Heart right ventricle (tissue), 16 donors: ENCODE measurements at regions of chr5 and their contacts with region 1.

Region 1: DNA sequence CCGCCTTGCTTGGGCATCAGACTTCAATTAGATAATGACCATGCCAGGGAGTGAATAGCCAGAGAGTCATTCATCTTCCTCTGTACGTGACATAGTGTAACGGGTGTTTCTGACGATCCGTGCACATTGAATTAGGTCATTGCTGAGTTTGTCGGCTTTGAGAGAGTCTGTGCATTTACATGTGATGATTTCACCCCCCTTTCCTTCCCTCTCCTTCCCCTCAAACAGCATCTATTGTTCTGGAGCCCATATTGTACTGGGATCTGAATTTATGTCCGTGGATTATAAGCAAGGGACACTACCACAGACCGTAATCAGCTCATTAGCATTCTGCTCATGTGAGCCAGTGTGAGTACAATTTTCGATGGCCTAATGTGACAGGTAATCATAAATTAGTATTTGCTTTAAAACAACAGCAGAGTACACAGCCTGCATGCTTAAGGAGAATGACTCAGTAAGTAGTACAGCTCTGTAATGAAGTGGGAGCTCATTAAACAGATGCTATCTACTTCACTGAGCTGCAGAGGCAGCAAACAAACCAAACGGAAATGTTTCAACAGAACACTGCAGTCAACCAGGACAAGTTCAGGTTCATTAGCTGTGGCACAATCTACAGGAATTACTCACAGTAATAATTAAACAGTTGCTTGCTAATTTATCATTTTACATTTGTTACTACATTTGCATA is 302.1 kb downstream of the CSNK1G3 start:
- DNase-seq: no peak
- ATAC-seq: peak; percentile 32 to 78 (median 73)
- H3K4me3 ChIP-seq: peak overlapping the region in 3 of 10 donors; percentile 0 to 20 (median 7)
- H3K27ac ChIP-seq: peak overlapping the region in 9 of 10 donors; percentile 6 to 76 (median 57)
- H3K4me1 ChIP-seq: peaks cover 6 to 54% (median 35%) of the 10 kb centered on the region in 9 donors
- H3K27me3 ChIP-seq: no peaks in the 10 kb centered on the region
- CTCF ChIP-seq: no peak

Region 2: DNA sequence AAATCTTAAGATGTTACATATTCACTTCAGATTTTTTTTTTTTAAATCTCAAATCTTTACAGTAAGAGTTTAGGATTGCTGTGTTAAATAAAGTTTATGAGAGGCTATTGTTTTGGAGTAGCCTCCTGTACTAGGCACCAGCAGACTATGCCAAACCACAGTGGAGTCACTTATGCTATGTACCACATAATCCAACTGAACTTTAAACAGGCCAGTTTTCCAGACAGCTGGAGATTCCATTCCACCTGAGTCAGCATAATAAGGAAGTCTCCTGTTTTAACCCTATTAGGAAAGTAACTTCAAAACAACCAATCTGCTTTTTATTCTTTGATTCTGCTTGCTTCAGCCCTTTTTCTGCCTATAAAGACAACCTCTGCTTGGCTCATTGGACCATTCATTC is 96.9 kb before region 1 on chr5:
- intact Hi-C with region 1: no loop called
- DNase-seq: no peak
- ATAC-seq: no peak
- H3K4me3 ChIP-seq: no peak overlapping the region
- H3K27ac ChIP-seq: no peak overlapping the region
- H3K4me1 ChIP-seq: peaks cover 0 to 4% (median 0%) of the 10 kb centered on the region in 9 donors
- H3K27me3 ChIP-seq: no peaks in the 10 kb centered on the region
- CTCF ChIP-seq: no peak

Region 3: GRCh38 chr5:123752552-123753179 is 61.4 kb before region 1 on chr5:
- intact Hi-C with region 1: loop called in 1 of 10 experiments (anchors 5 kb)
- DNase-seq: peak in 1 of 2 donors; percentile 11
- ATAC-seq: peak in 7 of 8 donors; percentile 43 to 90 (median 73)
- H3K4me3 ChIP-seq: no peak overlapping the region
- H3K27ac ChIP-seq: peak overlapping the region in 6 of 10 donors; percentile 16 to 64 (median 48)
- H3K4me1 ChIP-seq: peaks cover 0 to 36% (median 29%) of the 10 kb centered on the region in 9 donors
- H3K27me3 ChIP-seq: no peaks in the 10 kb centered on the region
- CTCF ChIP-seq: no peak

Region 4: DNA sequence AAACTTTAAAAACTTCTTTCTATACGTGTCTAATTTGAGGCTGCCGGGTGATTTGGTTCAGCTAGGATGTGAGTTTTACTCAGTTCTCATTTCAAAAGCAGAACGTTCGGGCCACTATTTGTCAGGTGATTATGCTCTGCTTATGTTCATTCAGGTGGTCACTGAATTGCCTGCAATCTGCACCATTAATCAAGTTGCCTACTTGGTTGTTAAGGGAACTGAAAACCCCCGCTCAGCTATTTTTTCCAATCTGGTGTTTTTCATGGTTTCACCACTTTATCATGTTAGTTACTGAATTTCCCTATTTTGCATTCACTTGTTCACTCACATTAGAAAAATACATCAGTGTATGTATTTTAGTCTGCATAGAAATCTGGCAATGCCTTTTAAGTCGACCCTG is 220.9 kb after region 1 on chr5:
- intact Hi-C with region 1: no loop called
- DNase-seq: no peak
- ATAC-seq: no peak
- H3K4me3 ChIP-seq: no peak overlapping the region
- H3K27ac ChIP-seq: no peak overlapping the region
- H3K4me1 ChIP-seq: no peaks in the 10 kb centered on the region
- H3K27me3 ChIP-seq: no peaks in the 10 kb centered on the region
- CTCF ChIP-seq: no peak